Mucosa of descending colon (tissue), 3 donors: ENCODE measurements at regions of chr3 and their contacts with region 1.

Region 1: DNA sequence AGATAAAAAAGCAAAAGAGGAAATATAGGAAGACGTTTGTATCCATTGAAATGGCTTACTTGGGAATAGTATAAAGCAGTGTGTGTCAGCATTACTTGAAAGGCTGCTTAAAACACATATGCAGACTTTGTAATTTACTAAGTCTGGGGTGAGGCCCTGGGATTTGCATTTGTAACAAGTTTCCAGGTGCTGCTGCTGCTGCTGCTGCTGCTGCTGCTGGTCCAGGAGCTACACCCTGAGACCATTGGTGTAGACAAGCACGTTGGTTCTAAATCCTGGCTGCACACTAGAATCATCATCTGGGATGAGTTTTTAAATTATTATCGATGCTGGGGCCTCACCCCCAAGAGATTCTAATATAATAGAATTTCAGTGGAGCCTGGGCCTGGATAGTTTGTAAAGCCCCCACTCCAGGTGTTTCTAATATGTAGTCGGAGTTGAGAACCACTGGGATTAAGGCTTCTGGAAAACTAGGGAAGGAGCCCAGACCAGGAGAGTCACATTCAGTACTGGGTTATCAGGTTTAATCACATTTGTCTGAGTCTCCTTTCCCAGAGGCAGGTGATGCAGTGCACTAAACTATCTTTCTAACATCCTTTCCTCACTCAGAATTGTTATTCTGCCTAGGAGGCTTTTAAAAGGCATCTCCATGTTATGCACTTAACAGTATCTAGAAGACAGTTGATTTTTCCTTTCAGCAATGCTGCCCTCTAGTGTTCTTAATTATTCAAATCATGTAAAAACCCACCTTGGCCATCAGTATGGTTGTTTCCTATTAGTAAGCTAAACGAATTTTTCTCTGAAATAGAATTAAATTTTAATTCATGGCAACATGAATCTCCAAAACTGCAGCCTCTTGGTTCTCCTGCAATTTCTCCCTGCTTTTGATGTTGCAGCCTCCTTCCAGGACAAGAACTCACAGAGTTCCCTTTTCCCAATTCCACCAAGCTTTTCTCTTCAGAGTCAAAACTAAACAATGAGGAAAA is 45.4 kb downstream of the SSR3 start:
- DNase-seq: no peak
- ATAC-seq: peak; percentile 72
- H3K4me3 ChIP-seq: no peak overlapping the region
- H3K4me1 ChIP-seq: no peaks in the 10 kb centered on the region
- CTCF ChIP-seq: no peak

Region 2: DNA sequence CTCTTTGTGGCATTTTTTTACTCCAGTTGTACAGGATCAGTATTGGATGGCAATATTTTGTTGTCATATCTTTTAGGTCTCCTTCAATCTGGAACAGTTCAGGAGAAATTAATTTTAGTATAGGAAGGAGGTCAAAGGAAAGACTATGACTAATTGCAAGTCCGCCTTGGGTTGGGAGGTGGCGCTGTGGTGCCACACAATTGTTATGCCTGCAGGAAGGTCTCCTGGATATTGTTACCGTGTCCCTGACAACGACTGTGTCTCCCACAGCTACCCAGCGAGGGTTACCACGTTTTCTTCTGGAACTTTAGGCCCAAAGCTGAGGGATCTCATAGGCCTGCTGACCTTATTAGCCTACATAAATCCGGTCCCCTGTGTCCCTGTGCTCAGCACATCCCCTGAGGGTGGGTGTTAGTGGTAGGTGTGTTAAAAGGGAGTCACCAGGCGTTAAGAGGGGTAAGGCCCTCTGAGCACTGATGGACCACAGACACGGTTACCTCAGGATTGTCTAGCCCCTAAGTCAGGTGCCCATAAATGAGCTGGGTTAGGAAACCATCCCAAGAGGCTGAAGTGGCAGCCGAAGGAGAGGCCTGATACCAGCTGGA is 357.6 kb before region 1 on chr3:
- intact Hi-C with region 1: loop called (anchors 10 kb)
- DNase-seq: peak; percentile 57 to 72 (median 69)
- ATAC-seq: peak; percentile 88
- H3K4me3 ChIP-seq: no peak overlapping the region
- H3K4me1 ChIP-seq: no peaks in the 10 kb centered on the region
- CTCF ChIP-seq: peak; percentile 45